ENCODE measurements at regions of chr4 and their contacts with region 1.

Region 1: GRCh38 chr4:48578132-48578968 is 88.3 kb downstream of the ZAR1 start:
- DNase-seq: peak; percentile 38
- H3K4me3 ChIP-seq: no peak overlapping the region
- H3K27ac ChIP-seq: no peak overlapping the region
- H3K27me3 ChIP-seq: no peaks in the 10 kb centered on the region
- CTCF ChIP-seq: peak; percentile 88

Region 2: DNA sequence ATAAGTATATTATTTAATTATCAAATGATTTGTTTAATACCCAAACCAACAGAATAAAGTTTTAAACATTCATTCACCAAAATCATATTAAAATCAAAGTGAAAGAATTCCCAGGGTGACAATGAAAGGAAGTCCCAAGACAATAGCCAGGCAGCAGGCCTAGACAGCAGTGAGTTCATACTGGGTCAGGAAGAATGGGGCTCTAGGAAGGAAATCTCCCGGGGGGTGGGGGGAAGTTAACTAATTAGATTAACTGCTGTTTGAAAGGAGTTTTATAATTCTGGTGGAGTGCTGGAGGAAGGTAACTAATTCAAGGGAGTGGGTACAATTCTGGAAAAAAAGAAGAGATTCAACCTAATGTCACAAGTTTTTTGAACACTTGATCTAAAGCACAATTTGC is 15.8 kb after region 1 on chr4:
- CTCF ChIA-PET with region 1: interaction called, 21 read pairs
- POLR2A ChIA-PET with region 1: no interaction called
- DNase-seq: no peak
- H3K4me3 ChIP-seq: no peak overlapping the region
- H3K27ac ChIP-seq: no peak overlapping the region
- H3K27me3 ChIP-seq: no peaks in the 10 kb centered on the region
- CTCF ChIP-seq: no peak

Region 3: DNA sequence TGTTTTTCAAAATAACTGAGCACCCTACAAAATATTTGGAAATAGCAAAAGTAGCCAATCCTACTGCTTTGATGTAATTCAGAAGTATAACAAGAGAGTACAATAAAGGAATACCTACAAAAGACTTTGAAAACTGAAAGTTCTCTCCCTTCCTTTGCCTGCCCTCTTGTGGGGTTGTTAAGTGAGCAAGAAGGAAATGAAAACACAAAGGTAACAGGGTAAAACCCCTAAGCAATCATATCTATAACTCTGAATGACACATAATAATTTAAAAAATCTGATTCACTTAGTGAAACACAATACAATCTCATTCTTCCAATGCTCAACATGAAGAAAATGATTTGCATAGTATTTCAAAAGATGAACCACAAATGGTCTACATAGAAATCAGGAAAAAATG is 103.5 kb after region 1 on chr4:
- CTCF ChIA-PET with region 1: interaction called, 23 read pairs
- POLR2A ChIA-PET with region 1: no interaction called
- DNase-seq: no peak
- H3K4me3 ChIP-seq: no peak overlapping the region
- H3K27ac ChIP-seq: no peak overlapping the region
- H3K27me3 ChIP-seq: no peaks in the 10 kb centered on the region
- CTCF ChIP-seq: peak; percentile 53

Region 4: DNA sequence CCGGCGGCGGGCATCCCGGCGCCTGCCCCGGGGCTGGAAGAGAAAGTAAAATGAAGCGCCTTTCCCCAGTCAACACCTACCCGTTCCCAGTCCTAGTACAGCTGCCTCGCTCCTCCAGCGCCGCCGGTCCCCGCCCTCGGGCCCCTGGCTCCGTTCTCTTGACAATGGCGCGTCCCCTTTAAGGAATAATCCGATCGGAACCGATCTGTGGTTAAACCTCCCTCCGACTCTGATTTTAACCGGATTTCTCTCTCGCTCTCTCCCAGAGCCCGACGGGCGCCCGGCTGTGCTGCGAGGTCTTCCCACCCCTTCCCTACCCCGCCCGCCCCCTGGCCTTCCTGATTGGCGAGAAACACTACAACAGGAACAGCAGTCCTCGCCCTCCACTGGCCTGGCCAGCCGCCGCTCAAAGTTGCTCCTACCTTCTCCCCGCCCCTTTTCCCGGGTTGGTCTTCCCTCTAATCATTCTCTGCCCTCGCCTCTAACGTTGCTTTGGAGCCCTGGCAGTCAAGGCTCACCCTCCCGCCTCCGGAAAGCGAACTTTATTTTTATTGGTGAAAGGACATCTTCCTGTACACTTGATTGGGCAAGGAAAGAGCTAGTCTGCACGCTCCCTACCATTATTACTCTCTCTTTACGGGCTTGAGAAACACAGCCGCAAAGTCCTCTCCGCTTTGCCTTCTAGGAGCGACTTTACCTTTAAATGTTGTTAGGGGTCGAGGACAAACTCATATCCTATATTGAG is 201.8 kb after region 1 on chr4 and contains the start of gene FRYL:
- CTCF ChIA-PET with region 1: interaction called, 20 read pairs
- POLR2A ChIA-PET with region 1: interaction called, 10 read pairs
- DNase-seq: peak; percentile 98
- H3K4me3 ChIP-seq: peak within 1 kb of the TSS; percentile 71
- H3K27ac ChIP-seq: peak within 1 kb of the TSS; percentile 94
- H3K27me3 ChIP-seq: no peaks in the 10 kb centered on the region
- CTCF ChIP-seq: no peak
- polyA plus RNA-seq, gene FRYL: 18.6 and 28.0 TPM in 2 replicates

Region 5: DNA sequence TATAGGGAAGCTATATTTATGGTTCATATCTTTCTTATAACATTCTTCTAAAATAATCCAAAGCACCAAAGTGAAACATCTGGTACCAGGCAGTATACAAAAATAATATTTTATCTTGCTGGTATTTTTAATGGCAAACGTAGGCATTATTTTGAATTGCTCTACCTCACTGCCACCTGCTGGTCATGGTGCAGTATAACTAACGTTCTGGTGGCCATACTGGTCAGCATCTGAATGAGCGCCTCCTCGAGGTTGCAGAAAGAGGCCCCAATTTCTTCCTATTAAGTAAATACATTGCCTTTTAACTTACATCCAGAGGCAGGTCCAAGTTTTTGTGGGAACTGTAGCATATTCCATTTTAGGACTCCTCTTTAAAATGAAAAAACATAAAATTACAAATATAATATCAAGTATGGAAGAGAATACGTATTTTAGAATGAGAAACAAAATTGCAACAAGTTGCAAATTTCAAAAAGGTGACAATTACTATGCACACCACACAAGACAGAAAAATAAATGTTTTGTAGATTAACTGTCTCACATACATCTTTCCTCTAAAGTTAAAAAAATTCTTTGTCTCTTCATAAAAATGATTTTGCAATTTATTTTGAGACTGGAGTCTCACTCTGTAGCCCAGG is 384.8 kb after region 1 on chr4:
- CTCF ChIA-PET with region 1: interaction called, 113 read pairs
- POLR2A ChIA-PET with region 1: no interaction called
- DNase-seq: peak; percentile 81
- H3K4me3 ChIP-seq: no peak overlapping the region
- H3K27ac ChIP-seq: no peak overlapping the region
- H3K27me3 ChIP-seq: no peaks in the 10 kb centered on the region
- CTCF ChIP-seq: peak; percentile 100

Measured in AG04450 (cell line).